A549 (cell line): ENCODE measurements at regions of chrX and their contacts with region 1.

Region 1: GRCh38 chrX:154526901-154527675 is 11.1 kb upstream of the FAM3A start:
- DNase-seq: peak in 1 of 2 experiments; percentile 89
- ATAC-seq: peak; percentile 62 to 64
- H3K4me3 ChIP-seq: no peak overlapping the region
- H3K27ac ChIP-seq: peak overlapping the region; percentile 72 to 93
- H3K4me1 ChIP-seq: peaks cover 70% of the 10 kb centered on the region
- CTCF ChIP-seq: peak; percentile 42
- EP300 ChIP-seq: no peak
- POLR2A ChIP-seq: peak; percentile 32
- RAD21 ChIP-seq: peak; percentile 35 to 37; a peak in 4 of 5 replicates

Region 2: GRCh38 chrX:154472688-154473632 is 54.1 kb before region 1 on chrX:
- CTCF ChIA-PET with region 1: no interaction called
- POLR2A ChIA-PET with region 1: no interaction called
- DNase-seq: no peak
- ATAC-seq: peak in 1 of 2 experiments; percentile 18; a peak in 2 of 6 replicates
- H3K4me3 ChIP-seq: no peak overlapping the region
- H3K27ac ChIP-seq: no peak overlapping the region
- H3K4me1 ChIP-seq: peaks cover 3% of the 10 kb centered on the region; the same call in 1 of the 3 replicates
- CTCF ChIP-seq: no peak
- EP300 ChIP-seq: no peak
- POLR2A ChIP-seq: no peak
- RAD21 ChIP-seq: no peak

Region 3: GRCh38 chrX:154490414-154491083 is 36.5 kb before region 1 on chrX and contains the start of gene SLC10A3:
- CTCF ChIA-PET with region 1: interaction called, 13 read pairs
- POLR2A ChIA-PET with region 1: interaction called, 6 read pairs
- DNase-seq: peak; percentile 89 to 95
- ATAC-seq: peak; percentile 85 to 94
- H3K4me3 ChIP-seq: peak within 1 kb of the TSS; percentile 74
- H3K27ac ChIP-seq: peak within 1 kb of the TSS; percentile 88 to 96
- H3K4me1 ChIP-seq: peaks cover 15% of the 10 kb centered on the region; the same call in 2 of the 3 replicates
- CTCF ChIP-seq: no peak
- EP300 ChIP-seq: no peak
- POLR2A ChIP-seq: peak; percentile 90
- RAD21 ChIP-seq: peak in 1 of 2 experiments; percentile 32; a peak in 3 of 5 replicates
- polyA plus RNA-seq, gene SLC10A3: 9.0 and 10.1 TPM in 2 replicates

Region 4: GRCh38 chrX:154546354-154547244 is 19.5 kb after region 1 on chrX and contains the start of gene G6PD:
- CTCF ChIA-PET with region 1: interaction called, 55 read pairs
- POLR2A ChIA-PET with region 1: interaction called, 8 read pairs
- DNase-seq: peak; percentile 65 to 86
- ATAC-seq: peak; percentile 8 to 22
- H3K4me3 ChIP-seq: peak within 1 kb of the TSS; percentile 95
- H3K27ac ChIP-seq: peak within 1 kb of the TSS; percentile 98 to 100
- H3K4me1 ChIP-seq: peaks cover 43% of the 10 kb centered on the region
- CTCF ChIP-seq: no peak
- EP300 ChIP-seq: no peak
- POLR2A ChIP-seq: peak; percentile 92
- RAD21 ChIP-seq: no peak
- polyA plus RNA-seq, gene G6PD: 692 and 774 TPM in 2 replicates